ENCODE measurements at regions of chr22 and their contacts with region 1.

Region 1: DNA sequence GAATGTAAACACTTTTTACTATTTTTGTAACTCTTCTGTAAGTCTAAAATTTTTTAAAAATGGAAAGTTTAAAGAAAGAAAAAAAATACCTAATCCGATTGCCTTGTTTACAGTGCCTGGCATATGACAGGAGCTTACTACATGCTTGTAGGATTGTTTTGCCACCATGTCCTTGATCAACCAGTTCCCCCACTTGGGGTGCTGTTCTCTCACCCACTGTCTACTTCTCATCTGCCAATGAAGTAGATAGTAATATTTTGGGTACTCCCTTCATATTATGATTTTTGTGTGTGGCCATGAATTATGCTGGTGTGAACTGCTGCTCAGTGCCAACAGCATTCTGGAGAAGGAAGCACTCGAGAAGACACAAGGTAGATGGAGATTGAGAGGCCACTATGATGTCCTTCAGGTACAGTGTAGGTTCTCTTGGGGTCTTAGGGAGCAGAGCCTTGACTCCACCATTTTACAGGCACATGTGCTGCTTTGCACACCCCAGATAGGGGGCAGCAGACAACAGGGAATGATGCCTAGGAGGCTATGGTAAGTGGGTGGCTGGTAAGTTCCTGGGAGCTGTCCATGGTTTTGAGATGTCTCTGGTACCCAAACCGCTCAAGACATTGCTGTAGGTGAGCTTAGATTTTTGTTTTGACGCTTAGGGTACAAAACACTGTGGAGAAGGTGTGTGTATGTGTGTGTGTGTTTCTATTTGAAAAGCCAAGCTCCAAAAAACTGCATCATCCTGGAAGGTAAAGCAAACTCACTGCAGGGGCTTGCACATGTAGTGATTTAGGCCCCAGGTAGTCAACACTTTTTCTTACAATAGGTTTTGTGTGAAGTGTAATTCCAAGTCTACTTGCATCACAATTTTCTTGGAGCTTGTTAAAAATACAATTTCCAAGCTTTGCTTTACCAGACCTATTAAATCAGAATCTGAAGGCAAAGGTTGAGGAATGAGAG is 494.5 kb upstream of the LARGE1 start:
- DNase-seq: peak in 1 of 2 donors; percentile 12
- ATAC-seq: peak in 3 of 8 donors; percentile 47 to 75 (median 48)
- H3K4me3 ChIP-seq: no peak overlapping the region
- H3K27ac ChIP-seq: no peak overlapping the region
- H3K4me1 ChIP-seq: no peaks in the 10 kb centered on the region
- H3K27me3 ChIP-seq: peaks cover 0 to 18% (median 0%) of the 10 kb centered on the region in 7 donors
- CTCF ChIP-seq: peak in 7 of 9 donors; percentile 33 to 56 (median 48)

Region 2: DNA sequence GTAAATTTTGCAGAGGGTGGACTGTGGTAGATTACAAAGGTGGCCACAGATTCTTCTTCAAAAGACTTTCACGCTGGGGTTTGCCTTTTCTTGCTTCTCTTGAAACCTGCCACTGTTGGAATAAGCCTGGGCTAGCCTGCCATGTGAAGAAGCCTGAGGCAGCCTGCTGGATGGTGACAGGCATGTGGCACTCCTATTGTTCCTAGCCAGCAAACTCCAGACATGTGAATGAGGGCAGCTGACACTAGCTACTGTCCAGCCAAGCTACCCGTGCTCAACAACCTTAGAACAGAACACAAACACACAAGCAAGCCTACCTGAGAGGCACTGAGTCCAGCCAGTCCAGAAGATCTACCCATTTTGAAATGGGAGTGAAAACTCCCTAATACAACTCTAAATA is 171.7 kb before region 1 on chr22:
- intact Hi-C with region 1: no loop called
- DNase-seq: peak in 1 of 2 donors; percentile 9
- ATAC-seq: peak in 6 of 8 donors; percentile 46 to 83 (median 70)
- H3K4me3 ChIP-seq: no peak overlapping the region
- H3K27ac ChIP-seq: no peak overlapping the region
- H3K4me1 ChIP-seq: peaks cover 0 to 10% (median 0%) of the 10 kb centered on the region in 9 donors
- H3K27me3 ChIP-seq: no peaks in the 10 kb centered on the region
- CTCF ChIP-seq: no peak

Region 3: DNA sequence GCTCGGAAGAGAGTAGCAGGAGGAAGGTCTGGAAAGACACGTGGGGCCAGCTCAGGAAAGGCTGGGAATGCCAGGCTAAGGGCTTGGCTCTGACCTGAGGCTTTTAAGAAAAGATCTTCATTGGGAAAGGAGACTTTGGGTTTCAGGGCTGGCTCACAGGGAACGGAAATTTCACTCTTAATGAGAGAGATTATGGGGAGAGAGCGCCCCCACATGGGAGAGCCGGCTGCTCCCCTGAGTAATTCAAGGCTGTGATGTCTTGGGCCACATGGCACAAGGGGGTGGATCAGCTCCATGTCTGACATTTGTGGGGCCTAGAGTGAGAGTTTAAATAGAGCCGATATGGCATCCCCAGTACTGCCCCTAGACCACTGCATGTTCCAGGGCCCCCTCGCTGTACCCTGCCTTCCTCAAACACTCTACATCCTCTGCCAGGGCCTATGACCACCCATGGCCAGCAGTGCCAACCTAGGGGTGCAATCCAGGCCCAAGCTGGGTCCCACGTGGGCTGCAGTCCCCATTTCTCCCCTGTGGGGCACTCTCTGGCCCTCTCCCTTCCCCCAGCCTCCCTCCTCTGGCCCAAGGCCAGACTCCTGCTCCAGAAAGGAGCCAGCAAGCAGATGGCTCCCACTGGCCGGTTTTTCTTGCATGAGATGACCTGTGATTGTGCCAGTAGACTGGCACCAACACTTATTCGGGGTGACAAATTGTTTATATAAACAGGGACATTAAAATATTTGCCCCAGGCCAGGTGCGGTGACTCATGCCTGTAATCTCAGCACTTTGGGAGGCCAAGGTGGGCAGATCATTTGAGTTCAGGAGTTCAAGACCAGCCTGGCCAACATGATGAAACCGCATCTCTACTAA is 726.4 kb after region 1 on chr22:
- intact Hi-C with region 1: loop called in 1 of 10 experiments (anchors 10 kb)
- DNase-seq: no peak
- ATAC-seq: no peak
- H3K4me3 ChIP-seq: no peak overlapping the region
- H3K27ac ChIP-seq: no peak overlapping the region
- H3K4me1 ChIP-seq: no peaks in the 10 kb centered on the region
- H3K27me3 ChIP-seq: peaks cover 0 to 11% (median 6%) of the 10 kb centered on the region in 7 donors
- CTCF ChIP-seq: no peak

Region 4: DNA sequence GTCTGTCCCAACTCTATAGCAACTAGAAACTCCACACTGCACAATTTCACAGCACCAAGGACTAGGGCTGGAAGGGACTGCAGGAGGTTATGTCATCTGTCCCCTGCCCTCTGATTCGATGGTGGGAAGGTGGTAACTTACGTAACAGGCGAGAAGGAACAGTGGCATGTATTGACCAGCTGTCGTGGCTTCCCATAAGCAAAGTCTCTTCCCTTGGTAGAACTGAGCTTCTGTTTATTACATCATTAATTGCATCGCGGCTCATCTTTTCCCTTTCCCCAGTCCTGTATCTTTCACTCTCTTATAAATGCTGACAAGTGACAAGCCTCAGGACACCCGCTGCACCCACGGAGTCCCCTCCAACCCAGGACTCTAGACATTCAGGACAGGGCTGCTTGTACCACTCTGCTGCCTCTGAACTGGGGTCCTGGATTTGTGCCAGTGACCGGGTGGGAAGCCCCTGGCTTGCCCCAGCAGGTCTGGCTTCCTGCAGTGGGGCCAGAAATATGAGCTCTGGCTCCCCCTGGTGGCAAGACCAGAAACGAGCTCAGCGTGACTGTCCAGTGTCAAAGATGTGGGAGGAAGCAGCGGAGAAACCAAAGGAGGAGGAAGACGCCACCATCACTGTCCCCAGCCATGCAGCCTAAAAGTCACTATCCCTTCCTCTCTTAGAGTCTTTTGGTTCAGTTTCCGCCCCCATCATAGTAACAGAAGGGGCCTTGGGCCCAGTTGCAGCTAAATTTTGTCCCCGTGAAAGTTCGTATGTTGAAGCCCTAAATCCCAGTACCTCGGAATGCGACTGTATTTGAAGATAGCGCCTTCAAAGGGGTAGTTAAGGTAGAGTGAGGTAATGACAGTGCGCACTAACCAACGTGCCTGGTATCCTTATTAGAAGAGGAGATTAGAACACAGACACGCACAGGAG is 735.7 kb after region 1 on chr22:
- intact Hi-C with region 1: loop called in 3 of 10 experiments (anchors 10 kb)
- DNase-seq: peak; percentile 50 to 58
- ATAC-seq: peak; percentile 28 to 81 (median 64)
- H3K4me3 ChIP-seq: no peak overlapping the region
- H3K27ac ChIP-seq: no peak overlapping the region
- H3K4me1 ChIP-seq: peaks cover 0 to 9% (median 0%) of the 10 kb centered on the region in 9 donors
- H3K27me3 ChIP-seq: peaks cover 0 to 32% (median 25%) of the 10 kb centered on the region in 7 donors
- CTCF ChIP-seq: peak; percentile 52 to 84 (median 75)

Measured in heart right ventricle (tissue), 16 donors.